Gastrocnemius medialis (tissue), 4 donors: ENCODE measurements at regions of chrX and their contacts with region 1.

Region 1: GRCh38 chrX:153153516-153153915 is 25.6 kb upstream of the MAGEA1 start:
- DNase-seq: no peak
- ATAC-seq: no peak
- H3K4me3 ChIP-seq: no peak overlapping the region
- H3K27ac ChIP-seq: no peak overlapping the region
- H3K4me1 ChIP-seq: no peaks in the 10 kb centered on the region
- H3K27me3 ChIP-seq: peaks cover 0 to 4% (median 0%) of the 10 kb centered on the region in 3 donors
- CTCF ChIP-seq: no peak
- POLR2A ChIP-seq: no peak

Region 2: DNA sequence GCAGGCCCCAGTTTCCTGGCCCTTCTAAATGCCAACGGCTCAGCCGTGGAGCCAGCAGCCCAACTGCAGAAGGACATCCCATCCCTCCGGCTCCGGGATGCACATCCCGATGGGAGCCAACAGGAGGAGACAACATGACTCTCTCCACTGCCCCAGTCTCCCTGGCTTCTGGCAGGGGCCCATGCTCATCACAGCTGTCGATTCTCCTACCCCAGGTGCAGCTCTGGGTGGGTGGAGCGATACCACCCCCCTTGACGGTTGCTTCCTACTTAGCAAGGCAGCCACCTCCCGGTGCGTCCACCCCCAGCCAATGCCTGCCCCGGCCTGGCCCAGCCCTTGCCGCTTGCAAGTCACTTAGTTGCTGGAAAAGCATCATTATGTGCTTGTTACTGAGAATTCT is 199.9 kb after region 1 on chrX:
- in situ Hi-C with region 1: loop called in 1 of 4 experiments (anchors 25 kb)
- intact Hi-C with region 1: no loop called
- DNase-seq: no peak
- ATAC-seq: no peak
- H3K4me3 ChIP-seq: no peak overlapping the region
- H3K27ac ChIP-seq: no peak overlapping the region
- H3K4me1 ChIP-seq: no peaks in the 10 kb centered on the region
- H3K27me3 ChIP-seq: no peaks in the 10 kb centered on the region
- CTCF ChIP-seq: no peak
- POLR2A ChIP-seq: no peak